Posterior vena cava (tissue), 2 donors: ENCODE measurements at regions of chrX and their contacts with region 1.

Region 1: DNA sequence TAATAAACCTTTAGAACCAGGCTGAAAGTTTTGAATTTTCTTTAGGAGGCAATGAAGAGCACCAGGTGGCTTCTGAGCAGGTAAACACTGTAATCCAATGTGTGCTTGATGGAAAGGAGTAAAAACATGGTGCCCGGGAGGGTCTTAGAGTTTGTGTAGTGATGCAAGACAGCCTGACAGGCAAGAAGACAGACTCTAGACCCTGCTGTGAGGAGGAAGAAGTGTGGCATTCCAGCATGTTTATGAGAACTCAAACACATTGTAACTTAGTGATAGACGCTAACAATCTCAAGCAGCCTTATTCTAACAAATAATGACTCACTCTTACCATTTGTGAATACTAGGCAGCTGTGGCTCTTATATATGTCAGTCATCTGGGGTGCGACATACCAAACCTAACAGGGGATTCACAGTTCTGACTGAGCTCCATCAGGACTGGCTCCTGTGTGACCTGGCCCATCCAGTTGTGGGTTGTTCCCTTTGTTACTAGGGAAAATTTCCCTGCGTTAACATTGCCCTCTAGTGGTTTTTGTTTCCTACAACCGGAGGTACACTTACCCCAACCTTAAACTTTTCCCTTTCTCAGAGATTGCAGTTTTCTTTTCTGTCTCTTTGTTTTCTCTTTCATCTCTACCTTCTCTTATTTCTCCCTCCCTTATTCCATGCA is 53.8 kb downstream of the VSIG4 start:
- DNase-seq: no peak

Region 2: GRCh38 chrX:65581661-65582339 is 404.3 kb before region 1 on chrX:
- intact Hi-C with region 1: loop called (anchors 5 kb)
- DNase-seq: no peak

Region 3: DNA sequence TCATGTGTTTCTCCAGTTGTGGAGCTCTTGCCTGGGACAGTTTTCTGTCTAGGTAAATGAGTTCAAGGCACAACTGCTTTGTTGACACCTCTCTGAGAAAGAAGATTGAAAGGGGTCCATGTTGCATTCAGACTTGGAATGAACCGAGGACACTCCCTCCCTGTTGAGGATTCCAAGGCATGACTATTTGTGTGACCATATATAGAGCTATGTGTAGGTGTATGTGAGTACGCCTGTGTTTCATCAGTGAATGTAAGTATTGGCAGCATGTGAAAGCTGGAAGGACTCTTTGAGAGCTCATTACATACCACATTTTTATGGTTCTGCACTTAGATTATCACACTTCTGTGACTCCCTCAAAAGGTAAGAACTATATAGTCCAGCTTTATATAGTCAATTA is 181.4 kb after region 1 on chrX:
- intact Hi-C with region 1: loop called in 1 of 2 experiments (anchors 5 kb)
- DNase-seq: no peak